Sciatic nerve (tissue), 2 donors: ENCODE measurements at regions of chr6 and their contacts with region 1.

Region 1: GRCh38 chr6:101178748-101179147 is 214.8 kb upstream of the GRIK2 start:
- DNase-seq: no peak
- ATAC-seq: no peak

Region 2: DNA sequence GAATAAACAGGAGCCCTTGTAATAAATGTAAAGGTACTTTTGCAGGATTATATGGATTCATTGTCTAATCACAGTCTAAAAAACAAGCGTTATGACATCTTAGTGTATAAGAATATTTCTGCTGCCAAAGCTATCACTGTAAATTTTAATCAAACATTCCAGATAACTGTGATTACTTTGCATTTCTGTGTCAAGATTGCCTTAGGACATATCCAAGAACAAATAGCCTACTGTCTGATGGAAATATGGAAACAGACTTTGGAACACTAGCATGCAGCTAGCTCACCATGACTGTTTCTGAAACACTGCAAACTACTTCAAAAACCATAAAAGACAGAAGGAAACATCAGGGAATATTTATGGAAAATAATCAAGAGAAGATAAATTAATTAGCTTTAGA is 48.9 kb before region 1 on chr6:
- intact Hi-C with region 1: no loop called
- DNase-seq: no peak
- ATAC-seq: no peak

Region 3: DNA sequence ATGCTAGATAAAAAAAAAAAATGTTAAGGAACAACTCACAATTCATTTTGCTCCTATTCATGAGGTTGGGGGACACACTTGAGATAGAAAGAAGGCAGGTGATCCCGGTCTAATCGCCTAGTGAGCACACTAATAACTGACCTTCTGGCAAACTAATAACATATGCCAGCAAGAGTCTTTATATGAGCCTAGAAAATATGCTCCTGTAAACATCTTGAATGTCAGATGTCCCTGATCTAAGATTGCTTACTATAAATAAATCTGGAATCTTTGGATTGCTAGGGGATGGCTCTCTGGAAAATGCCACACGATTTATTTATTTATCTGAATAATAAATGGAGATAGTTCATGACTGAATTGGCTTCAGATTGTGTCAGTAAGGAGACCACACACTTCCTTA is 1036.7 kb after region 1 on chr6:
- intact Hi-C with region 1: loop called (anchors 5 kb)
- DNase-seq: no peak
- ATAC-seq: no peak